ENCODE measurements at regions of chr17 and their contacts with region 1.

Region 1: DNA sequence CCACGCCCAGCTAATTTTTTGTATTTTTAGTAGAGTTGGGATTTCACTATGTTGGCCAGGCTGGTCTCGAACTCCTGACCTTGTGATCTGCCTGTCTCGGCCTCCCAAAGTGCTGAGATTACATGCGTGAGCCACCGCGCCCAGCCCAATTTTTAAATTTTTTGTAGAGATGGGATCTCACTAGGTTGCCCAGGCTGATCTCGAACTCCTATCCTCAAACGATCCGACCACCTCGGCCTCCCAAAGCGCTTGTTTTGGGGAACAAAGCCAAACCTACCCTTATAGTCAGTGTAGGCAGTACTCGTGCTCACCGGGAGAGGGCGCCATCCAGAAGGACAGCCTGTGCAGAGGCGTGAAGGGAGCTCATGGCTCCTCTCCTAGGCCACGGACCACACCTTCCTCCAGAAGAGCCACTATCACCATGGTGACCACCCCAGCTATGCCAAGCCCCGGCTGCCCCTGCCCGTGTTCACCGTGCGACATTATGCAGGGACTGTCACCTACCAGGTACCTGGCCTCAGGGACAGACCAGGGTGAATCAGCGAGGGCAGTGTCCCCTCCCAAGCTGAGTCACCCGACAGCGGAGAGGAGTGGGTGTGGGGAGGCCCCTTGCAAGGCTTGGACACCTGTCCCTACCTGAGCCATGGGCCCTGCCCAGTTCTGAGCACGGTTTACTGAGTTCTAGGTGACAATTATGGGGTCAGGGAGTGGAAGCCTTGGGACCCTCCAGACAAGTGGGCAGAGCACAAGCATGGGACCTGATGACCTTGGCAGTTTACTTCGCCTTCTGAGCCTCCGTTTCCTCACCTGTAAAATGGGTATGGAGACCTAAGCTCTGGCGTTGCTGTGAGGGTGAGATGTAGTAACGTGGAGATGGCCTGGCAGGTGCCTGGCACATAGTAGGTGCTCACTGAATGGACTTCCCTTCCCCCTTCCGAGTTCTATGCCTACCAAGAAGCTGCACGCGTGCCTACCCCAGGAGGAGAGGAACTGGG is 13.8 kb downstream of the MYO15B start:
- DNase-seq: peak; percentile 96
- ATAC-seq: peak; percentile 89
- H3K4me3 ChIP-seq: peak overlapping the region in 1 of 2 experiments; percentile 30; a peak in 2 of 4 replicates
- H3K27ac ChIP-seq: peak overlapping the region; percentile 2; the same call in 1 of the 2 replicates
- H3K4me1 ChIP-seq: peaks cover 15 to 51% of the 10 kb centered on the region in 2 experiments
- H3K27me3 ChIP-seq: no peaks in the 10 kb centered on the region
- CTCF ChIP-seq: peak; percentile 95 to 100 (median 99); a peak in 5 of 6 replicates
- POLR2A ChIP-seq: no peak
- RAD21 ChIP-seq: peak; percentile 87

Region 2: GRCh38 chr17:75515496-75516254 is 85.7 kb before region 1 on chr17 and contains the start of gene CASKIN2:
- CTCF ChIA-PET with region 1: interaction called, 15 read pairs
- POLR2A ChIA-PET with region 1: interaction called, 5 read pairs
- RAD21 ChIA-PET with region 1: no interaction called
- intact Hi-C with region 1: loop called (anchors 5 kb)
- DNase-seq: peak; percentile 88
- ATAC-seq: peak; percentile 77
- H3K4me3 ChIP-seq: peak within 1 kb of the TSS; percentile 87 to 91
- H3K27ac ChIP-seq: peak within 1 kb of the TSS; percentile 86
- H3K4me1 ChIP-seq: peaks cover 28 to 60% of the 10 kb centered on the region in 2 experiments
- H3K27me3 ChIP-seq: no peaks in the 10 kb centered on the region
- CTCF ChIP-seq: peak; percentile 100
- POLR2A ChIP-seq: no peak
- RAD21 ChIP-seq: peak; percentile 94
- total RNA-seq, gene CASKIN2: 38.4 TPM

Region 3: GRCh38 chr17:75574416-75575036 is 26.8 kb before region 1 on chr17:
- CTCF ChIA-PET with region 1: interaction called, 11 read pairs
- POLR2A ChIA-PET with region 1: no interaction called
- RAD21 ChIA-PET with region 1: no interaction called
- intact Hi-C with region 1: no loop called
- DNase-seq: no peak
- ATAC-seq: no peak
- H3K4me3 ChIP-seq: no peak overlapping the region
- H3K27ac ChIP-seq: no peak overlapping the region
- H3K4me1 ChIP-seq: peaks cover 9% of the 10 kb centered on the region in 2 experiments; a peak in 2 of 4 replicates
- H3K27me3 ChIP-seq: no peaks in the 10 kb centered on the region
- CTCF ChIP-seq: no peak
- POLR2A ChIP-seq: no peak
- RAD21 ChIP-seq: no peak

Region 4: DNA sequence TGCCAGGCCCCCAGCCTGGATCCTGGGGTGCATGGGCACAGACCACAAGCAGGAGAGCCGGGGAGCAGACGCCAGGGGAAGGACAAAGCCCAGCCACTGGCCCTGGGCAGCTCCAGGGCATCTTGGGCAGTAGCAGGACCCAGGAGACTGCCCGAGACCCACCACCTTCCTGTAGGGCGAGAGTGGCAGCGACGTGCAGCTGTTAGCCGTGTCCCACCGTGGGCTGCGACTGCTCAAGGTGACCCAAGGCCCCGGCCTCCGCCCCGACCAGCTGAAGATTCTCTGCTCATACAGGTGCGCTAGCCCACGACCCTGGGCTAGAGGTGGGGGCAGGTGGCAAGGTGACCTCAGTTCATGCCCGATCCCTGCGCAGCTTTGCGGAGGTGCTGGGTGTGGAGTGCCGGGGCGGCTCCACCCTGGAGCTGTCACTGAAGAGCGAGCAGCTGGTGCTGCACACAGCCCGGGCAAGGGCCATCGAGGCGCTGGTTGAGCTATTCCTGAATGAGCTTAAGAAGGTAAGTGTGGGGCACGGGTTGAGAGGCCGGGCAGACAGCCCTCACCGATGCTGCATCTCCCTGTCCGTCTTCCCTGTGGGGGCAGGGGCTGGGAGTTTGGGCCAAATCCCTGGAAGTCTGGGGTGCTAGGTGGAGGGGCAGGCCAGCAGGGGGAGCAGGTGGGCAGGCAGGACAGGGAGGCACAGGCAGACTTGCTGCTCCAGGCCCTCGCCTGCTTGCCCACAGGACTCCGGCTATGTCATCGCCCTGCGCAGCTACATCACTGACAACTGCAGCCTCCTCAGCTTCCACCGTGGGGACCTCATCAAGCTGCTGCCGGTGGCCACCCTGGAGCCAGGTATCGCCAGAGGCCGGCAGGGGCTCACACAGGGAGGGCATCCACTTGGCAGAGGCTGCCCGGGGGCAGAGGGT is 18.4 kb after region 1 on chr17:
- CTCF ChIA-PET with region 1: interaction called, 15 read pairs
- POLR2A ChIA-PET with region 1: interaction called, 3 read pairs
- RAD21 ChIA-PET with region 1: no interaction called
- intact Hi-C with region 1: no loop called
- DNase-seq: no peak
- ATAC-seq: peak; percentile 80
- H3K4me3 ChIP-seq: no peak overlapping the region
- H3K27ac ChIP-seq: no peak overlapping the region
- H3K4me1 ChIP-seq: peaks cover 0 to 5% of the 10 kb centered on the region in 2 experiments; a peak in 1 of 4 replicates
- H3K27me3 ChIP-seq: no peaks in the 10 kb centered on the region
- CTCF ChIP-seq: peak; percentile 41 to 73 (median 65); a peak in 5 of 6 replicates
- POLR2A ChIP-seq: no peak
- RAD21 ChIP-seq: no peak

Region 5: DNA sequence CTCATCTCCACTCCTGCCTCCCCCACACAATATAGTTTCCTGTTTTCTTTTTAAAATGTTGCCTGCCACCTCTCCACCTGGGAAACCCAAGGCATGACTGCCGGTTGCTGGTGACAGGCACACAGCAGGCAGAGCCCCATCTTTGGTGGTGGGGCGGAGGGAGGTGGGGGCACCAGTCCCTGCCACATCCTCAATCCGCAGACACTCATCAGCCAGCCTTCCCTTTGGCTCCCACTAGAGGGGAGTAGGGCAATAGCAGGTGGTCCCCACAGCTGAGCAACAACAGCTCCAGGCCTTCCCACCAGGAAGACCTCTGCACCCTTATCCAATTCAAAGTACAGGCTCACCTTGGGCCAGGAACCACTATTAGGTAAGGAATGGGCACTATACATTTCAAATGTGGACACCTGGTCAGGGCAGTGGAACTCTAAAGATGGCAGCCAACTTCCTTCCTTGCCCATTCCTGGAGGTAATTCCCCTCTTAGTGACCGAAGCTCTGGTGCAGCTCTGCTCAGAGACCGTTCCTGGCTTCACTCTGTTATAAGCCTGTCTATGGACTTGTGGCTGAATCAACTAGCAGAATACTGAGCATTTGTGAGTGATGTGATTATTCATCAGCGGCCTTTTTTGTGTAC is 51.7 kb after region 1 on chr17:
- CTCF ChIA-PET with region 1: interaction called, 15 read pairs
- POLR2A ChIA-PET with region 1: no interaction called
- RAD21 ChIA-PET with region 1: no interaction called
- intact Hi-C with region 1: no loop called
- DNase-seq: no peak
- ATAC-seq: peak; percentile 95
- H3K4me3 ChIP-seq: no peak overlapping the region
- H3K27ac ChIP-seq: no peak overlapping the region
- H3K4me1 ChIP-seq: no peaks in the 10 kb centered on the region
- H3K27me3 ChIP-seq: no peaks in the 10 kb centered on the region
- CTCF ChIP-seq: peak; percentile 87 to 98 (median 95)
- POLR2A ChIP-seq: no peak
- RAD21 ChIP-seq: peak; percentile 82